GM12878 (cell line): ENCODE measurements at regions of chr5 and their contacts with region 1.

Region 1: DNA sequence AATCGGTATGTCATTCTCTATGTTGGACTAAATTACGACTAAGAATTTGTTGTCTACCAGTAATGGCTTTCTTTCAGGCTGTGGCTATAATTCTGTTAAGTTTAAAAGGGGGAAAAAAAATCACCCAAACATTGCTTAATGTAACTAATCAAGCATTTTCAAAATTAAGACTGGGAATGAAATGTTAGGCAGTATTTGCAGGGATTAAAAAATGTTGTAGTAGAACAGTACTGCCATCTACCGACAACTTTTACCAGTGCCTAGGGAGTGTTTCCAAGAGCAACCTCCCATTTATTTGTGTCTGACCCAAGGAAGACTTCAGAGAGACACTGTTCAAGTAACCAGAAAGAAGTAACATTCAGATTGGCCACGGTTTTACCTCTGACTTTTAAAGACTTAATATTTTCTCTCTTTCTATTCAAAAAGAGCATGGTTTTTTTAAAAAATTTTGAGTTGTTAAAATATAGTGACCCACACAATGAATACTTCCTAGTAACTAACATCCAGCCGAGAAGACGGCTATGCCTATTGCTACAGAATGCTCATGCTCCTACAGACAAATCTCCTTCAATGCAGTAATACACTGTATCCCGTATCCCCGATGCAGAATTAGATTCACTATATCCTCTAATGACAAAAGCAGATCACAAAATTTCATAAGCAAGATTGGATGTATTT is 92.4 kb downstream of the ARL15 start:
- DNase-seq: no peak
- ATAC-seq: peak; percentile 70
- H3K4me3 ChIP-seq: no peak overlapping the region
- H3K27ac ChIP-seq: no peak overlapping the region
- H3K4me1 ChIP-seq: no peaks in the 10 kb centered on the region
- H3K27me3 ChIP-seq: no peaks in the 10 kb centered on the region
- CTCF ChIP-seq: peak; percentile 54 to 78 (median 64); a peak in 5 of 6 replicates
- EP300 ChIP-seq: no peak
- POLR2A ChIP-seq: no peak
- RAD21 ChIP-seq: peak; percentile 68

Region 2: GRCh38 chr5:53170748-53171349 is 1047.1 kb before region 1 on chr5:
- CTCF ChIA-PET with region 1: no interaction called
- POLR2A ChIA-PET with region 1: no interaction called
- RAD21 ChIA-PET with region 1: no interaction called
- SMC1A ChIA-PET with region 1: no interaction called
- in situ Hi-C with region 1: no loop called
- intact Hi-C with region 1: loop called (anchors 5 kb)
- DNase-seq: no peak
- ATAC-seq: peak; percentile 66; the same call in 2 of the 3 replicates
- H3K4me3 ChIP-seq: no peak overlapping the region
- H3K27ac ChIP-seq: no peak overlapping the region
- H3K4me1 ChIP-seq: no peaks in the 10 kb centered on the region
- H3K27me3 ChIP-seq: no peaks in the 10 kb centered on the region
- CTCF ChIP-seq: peak; percentile 48 to 56 (median 56); a peak in 5 of 6 replicates
- EP300 ChIP-seq: no peak
- POLR2A ChIP-seq: no peak
- RAD21 ChIP-seq: peak; percentile 80

Region 3: DNA sequence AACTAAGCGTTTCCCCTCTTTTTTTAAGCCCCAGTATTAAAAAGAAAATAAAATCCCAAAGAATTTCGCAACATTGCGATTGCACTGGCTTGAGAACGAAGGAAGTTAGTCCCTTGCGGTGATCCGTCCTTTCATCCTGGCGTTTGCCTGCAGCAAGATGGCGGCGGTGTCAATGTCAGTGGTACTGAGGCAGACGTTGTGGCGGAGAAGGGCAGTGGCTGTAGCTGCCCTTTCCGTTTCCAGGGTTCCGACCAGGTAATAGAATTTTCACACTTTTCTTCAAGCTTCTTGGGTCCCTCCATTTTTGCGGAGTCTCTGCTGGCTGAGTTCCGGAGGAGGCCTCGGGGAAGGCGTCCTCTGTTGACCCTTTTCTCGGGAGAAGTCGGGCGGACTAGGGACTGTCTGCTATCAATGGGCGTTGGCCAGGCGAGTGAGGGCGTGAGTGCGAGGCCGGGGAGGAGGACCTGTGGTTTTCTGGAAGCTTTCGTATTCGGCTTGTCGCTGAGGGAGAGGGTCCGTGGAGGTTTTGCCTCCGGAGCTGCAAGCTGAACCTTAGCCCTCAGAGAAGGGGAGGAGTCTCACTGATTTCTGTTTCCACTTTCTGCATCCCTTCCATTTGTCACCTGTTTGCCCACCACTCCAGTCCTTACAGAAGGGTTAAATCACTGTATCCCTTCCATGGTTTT is 657.3 kb before region 1 on chr5 and contains the start of gene NDUFS4:
- CTCF ChIA-PET with region 1: no interaction called
- POLR2A ChIA-PET with region 1: no interaction called
- RAD21 ChIA-PET with region 1: no interaction called
- SMC1A ChIA-PET with region 1: no interaction called
- in situ Hi-C with region 1: no loop called
- intact Hi-C with region 1: loop called (anchors 10 kb)
- DNase-seq: peak; percentile 45
- ATAC-seq: peak; percentile 91
- H3K4me3 ChIP-seq: peak within 1 kb of the TSS; percentile 93
- H3K27ac ChIP-seq: peak within 1 kb of the TSS; percentile 87
- H3K4me1 ChIP-seq: no peaks in the 10 kb centered on the region
- H3K27me3 ChIP-seq: no peaks in the 10 kb centered on the region
- CTCF ChIP-seq: no peak
- EP300 ChIP-seq: no peak
- POLR2A ChIP-seq: peak; percentile 93
- RAD21 ChIP-seq: no peak
- polyA plus RNA-seq, gene NDUFS4: 303 to 366 TPM

Region 4: DNA sequence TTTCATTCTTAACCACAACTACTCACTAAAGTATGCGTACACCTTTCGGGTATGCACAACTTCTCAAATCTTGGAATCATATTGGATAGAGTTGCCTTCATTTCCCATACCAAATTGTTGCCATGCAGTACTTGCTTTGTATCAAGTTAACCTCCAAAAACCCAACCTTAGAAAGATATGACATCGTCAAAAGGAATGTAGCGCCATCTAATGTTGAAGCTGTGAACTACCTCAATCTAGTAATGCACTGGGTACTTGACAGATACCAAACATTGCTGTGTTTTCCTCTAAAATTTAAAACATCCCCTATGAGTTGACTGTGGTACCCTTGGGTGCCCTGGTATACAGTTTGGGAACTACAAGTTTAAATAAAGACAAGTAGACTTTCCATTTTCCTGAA is 226.0 kb before region 1 on chr5:
- CTCF ChIA-PET with region 1: no interaction called
- POLR2A ChIA-PET with region 1: no interaction called
- RAD21 ChIA-PET with region 1: no interaction called
- SMC1A ChIA-PET with region 1: no interaction called
- in situ Hi-C with region 1: no loop called
- intact Hi-C with region 1: loop called (anchors 10 kb)
- DNase-seq: peak; percentile 3
- ATAC-seq: peak; percentile 41; the same call in 1 of the 3 replicates
- H3K4me3 ChIP-seq: no peak overlapping the region
- H3K27ac ChIP-seq: no peak overlapping the region
- H3K4me1 ChIP-seq: no peaks in the 10 kb centered on the region
- H3K27me3 ChIP-seq: no peaks in the 10 kb centered on the region
- CTCF ChIP-seq: peak; percentile 25 to 47 (median 36); a peak in 5 of 6 replicates
- EP300 ChIP-seq: no peak
- POLR2A ChIP-seq: no peak
- RAD21 ChIP-seq: peak; percentile 39

Region 5: GRCh38 chr5:54234304-54234933 is 16.5 kb after region 1 on chr5:
- CTCF ChIA-PET with region 1: interaction called, 13 read pairs
- POLR2A ChIA-PET with region 1: no interaction called
- RAD21 ChIA-PET with region 1: interaction called, 5 read pairs
- SMC1A ChIA-PET with region 1: interaction called, 5 read pairs
- in situ Hi-C with region 1: no loop called
- intact Hi-C with region 1: no loop called
- DNase-seq: no peak
- ATAC-seq: peak; percentile 72
- H3K4me3 ChIP-seq: no peak overlapping the region
- H3K27ac ChIP-seq: no peak overlapping the region
- H3K4me1 ChIP-seq: no peaks in the 10 kb centered on the region
- H3K27me3 ChIP-seq: no peaks in the 10 kb centered on the region
- CTCF ChIP-seq: peak; percentile 26 to 50 (median 50); a peak in 5 of 6 replicates
- EP300 ChIP-seq: no peak
- POLR2A ChIP-seq: no peak
- RAD21 ChIP-seq: peak; percentile 66